Cardiac septum (tissue), 1 donor: ENCODE measurements at regions of chr4 and their contacts with region 1.

Region 1: GRCh38 chr4:119212234-119212963 is at the start of gene USP53:
- DNase-seq: peak; percentile 98
- total RNA-seq, gene USP53: 49.7 TPM

Region 2: GRCh38 chr4:118740869-118741268 is 471.5 kb before region 1 on chr4:
- intact Hi-C with region 1: loop called (anchors 10 kb)
- DNase-seq: no peak

Region 3: GRCh38 chr4:118981839-118982381 is 230.5 kb before region 1 on chr4:
- intact Hi-C with region 1: loop called (anchors 5 kb)
- DNase-seq: no peak

Region 4: GRCh38 chr4:119103263-119103662 is 109.1 kb before region 1 on chr4:
- intact Hi-C with region 1: loop called (anchors 5 kb)
- DNase-seq: no peak

Region 5: GRCh38 chr4:119130365-119131065 is 81.9 kb before region 1 on chr4:
- intact Hi-C with region 1: loop called (anchors 5 kb)
- DNase-seq: no peak

Region 6: DNA sequence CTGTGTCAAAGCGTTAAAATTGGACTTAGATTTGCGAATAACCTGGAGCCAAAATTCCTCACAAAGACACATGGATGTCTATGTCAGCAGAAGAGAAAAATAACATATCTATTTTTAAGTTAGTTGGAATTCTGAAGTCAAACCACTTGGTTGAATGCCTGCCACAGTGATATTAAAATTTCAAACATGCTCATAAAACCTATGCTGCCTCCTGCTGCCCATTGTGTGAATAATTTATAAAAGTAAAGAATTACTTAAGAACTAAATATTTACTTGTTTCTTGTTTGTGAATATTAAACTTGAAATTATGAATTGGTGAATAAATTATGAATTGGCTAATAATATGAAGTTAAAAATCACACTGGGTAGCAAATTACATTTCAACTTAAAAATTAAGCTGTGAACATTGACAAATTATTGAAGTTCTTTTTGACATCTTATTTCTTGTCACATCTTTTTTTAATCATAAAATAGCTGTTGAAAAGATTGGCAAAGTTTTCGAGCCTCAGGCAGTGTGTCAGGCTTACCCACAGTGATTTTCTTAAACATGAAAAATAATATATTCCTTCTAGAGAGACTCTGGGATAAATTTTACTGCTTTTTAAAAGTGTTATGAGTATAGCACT is 74.1 kb after region 1 on chr4:
- intact Hi-C with region 1: loop called (anchors 5 kb)
- DNase-seq: no peak